ENCODE measurements at regions of chr19 and their contacts with region 1.

Region 1: GRCh38 chr19:7919610-7920518 is at the start of gene SNAPC2:
- DNase-seq: peak; percentile 96 to 99 (median 97)
- H3K4me3 ChIP-seq: peak within 1 kb of the TSS; percentile 71 to 76
- H3K4me3 Mint-ChIP-seq: peak within 1 kb of the TSS; percentile 88 to 97 (median 92)
- H3K27ac ChIP-seq: peak within 1 kb of the TSS; percentile 76
- H3K27ac Mint-ChIP-seq: peak within 1 kb of the TSS; percentile 85 to 96 (median 94)
- H3K4me1 ChIP-seq: peaks cover 53% of the 10 kb centered on the region
- H3K4me1 Mint-ChIP-seq: peaks cover 14 to 59% (median 38%) of the 10 kb centered on the region in 4 donors
- H3K27me3 ChIP-seq: peaks cover 13% of the 10 kb centered on the region
- H3K27me3 Mint-ChIP-seq: peaks cover 15 to 26% of the 10 kb centered on the region in 2 donors
- total RNA-seq, gene SNAPC2: 16.3 to 18.9 TPM

Region 2: DNA sequence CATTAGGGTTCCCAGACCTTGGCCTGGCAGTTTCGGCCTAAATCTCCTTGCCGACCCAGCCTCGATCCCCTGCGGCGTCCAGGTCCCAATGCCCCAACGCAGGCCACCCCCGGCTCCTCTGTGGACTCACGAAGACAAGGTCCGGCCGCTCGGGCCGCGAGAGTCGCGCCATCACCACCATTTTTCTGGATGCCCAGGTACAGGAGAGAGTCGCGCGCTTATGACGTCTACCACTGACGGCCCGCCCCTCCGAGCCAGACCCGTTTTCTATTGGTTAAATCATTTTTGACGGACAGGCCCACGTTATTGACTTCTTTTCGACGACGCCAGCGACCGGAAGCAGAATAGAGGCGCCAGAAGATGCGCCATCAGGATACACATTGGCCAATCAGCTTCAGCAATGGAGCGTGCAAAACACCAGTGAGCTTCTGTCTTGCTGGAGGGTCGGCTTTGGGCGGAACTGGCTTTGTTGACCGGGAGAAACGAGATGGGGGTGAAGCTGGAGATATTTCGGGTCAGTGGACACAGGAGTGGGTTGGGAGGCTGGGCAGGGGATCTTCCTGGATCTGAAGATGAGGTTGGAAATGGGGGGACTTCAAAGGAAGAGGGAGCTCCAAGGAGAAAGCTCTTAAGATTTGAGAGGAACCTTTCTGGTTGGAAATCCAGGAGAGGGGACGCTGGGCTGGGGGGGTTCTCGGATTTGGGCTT is 290.4 kb before region 1 on chr19 and contains the starts of genes PET100 and XAB2:
- CTCF ChIA-PET with region 1: no interaction called
- POLR2A ChIA-PET with region 1: interaction called, 6 read pairs
- intact Hi-C with region 1: loop called (anchors 5 kb)
- DNase-seq: peak; percentile 93 to 98 (median 96)
- H3K4me3 ChIP-seq: peak within 1 kb of the TSS; percentile 81 to 96
- H3K4me3 Mint-ChIP-seq: peak within 1 kb of the TSS; percentile 95 to 99 (median 96)
- H3K27ac ChIP-seq: peak within 1 kb of the TSS; percentile 94
- H3K27ac Mint-ChIP-seq: peak within 1 kb of the TSS; percentile 92 to 100 (median 99)
- H3K4me1 ChIP-seq: peaks cover 31% of the 10 kb centered on the region
- H3K4me1 Mint-ChIP-seq: peaks cover 16 to 47% (median 34%) of the 10 kb centered on the region in 4 donors
- H3K27me3 ChIP-seq: no peaks in the 10 kb centered on the region
- H3K27me3 Mint-ChIP-seq: no peaks in the 10 kb centered on the region
- total RNA-seq, gene PET100: 120 to 144 TPM
- total RNA-seq, gene XAB2: 75.6 to 77.2 TPM

Region 3: DNA sequence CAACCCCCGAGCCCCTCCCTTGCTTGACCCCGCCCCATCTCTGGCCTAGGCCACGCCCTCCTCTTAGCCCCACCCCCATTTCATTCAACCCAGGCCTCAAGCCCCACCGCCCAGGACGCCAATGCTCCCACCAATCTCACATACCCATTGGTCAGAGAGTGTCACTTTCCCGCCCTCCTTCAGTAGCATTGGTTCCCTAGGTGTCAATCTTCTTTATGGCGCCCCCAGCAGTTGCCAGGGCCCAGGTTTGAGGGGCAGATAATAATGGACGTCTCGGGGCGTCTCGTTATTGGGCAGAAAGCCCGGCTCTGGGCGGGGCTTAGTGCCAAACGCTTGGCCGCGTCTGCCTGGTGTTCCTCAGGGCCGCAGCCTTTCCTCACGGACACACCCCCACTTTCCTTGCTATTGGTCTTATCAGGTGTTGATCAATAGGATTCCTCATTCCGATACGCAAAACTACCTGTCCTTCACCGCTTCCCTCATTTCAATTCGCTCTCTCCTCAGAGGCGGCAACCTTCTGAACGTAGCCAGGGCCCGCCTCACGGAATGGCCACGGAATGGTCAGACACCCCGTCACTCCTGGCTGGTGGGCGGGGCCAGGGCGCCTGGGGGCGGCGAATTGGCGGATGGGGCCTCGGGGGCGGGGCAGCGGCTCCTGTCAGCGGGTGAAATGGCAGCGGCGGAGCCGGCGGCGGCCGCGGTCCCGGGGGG is 90.1 kb before region 1 on chr19 and contains the start of gene EVI5L:
- CTCF ChIA-PET with region 1: no interaction called
- POLR2A ChIA-PET with region 1: interaction called, 3 read pairs
- intact Hi-C with region 1: loop called (anchors 1 kb)
- DNase-seq: peak; percentile 99
- H3K4me3 ChIP-seq: peak within 1 kb of the TSS in 1 of 2 donors; percentile 50
- H3K4me3 Mint-ChIP-seq: peak within 1 kb of the TSS; percentile 76 to 88 (median 86)
- H3K27ac ChIP-seq: peak within 1 kb of the TSS; percentile 36
- H3K27ac Mint-ChIP-seq: peak within 1 kb of the TSS; percentile 63 to 90 (median 87)
- H3K4me1 ChIP-seq: peaks cover 22% of the 10 kb centered on the region
- H3K4me1 Mint-ChIP-seq: peaks cover 11 to 28% (median 18%) of the 10 kb centered on the region in 4 donors
- H3K27me3 ChIP-seq: no peaks in the 10 kb centered on the region
- H3K27me3 Mint-ChIP-seq: no peaks in the 10 kb centered on the region
- total RNA-seq, gene EVI5L: 11.9 to 14.1 TPM

Region 4: DNA sequence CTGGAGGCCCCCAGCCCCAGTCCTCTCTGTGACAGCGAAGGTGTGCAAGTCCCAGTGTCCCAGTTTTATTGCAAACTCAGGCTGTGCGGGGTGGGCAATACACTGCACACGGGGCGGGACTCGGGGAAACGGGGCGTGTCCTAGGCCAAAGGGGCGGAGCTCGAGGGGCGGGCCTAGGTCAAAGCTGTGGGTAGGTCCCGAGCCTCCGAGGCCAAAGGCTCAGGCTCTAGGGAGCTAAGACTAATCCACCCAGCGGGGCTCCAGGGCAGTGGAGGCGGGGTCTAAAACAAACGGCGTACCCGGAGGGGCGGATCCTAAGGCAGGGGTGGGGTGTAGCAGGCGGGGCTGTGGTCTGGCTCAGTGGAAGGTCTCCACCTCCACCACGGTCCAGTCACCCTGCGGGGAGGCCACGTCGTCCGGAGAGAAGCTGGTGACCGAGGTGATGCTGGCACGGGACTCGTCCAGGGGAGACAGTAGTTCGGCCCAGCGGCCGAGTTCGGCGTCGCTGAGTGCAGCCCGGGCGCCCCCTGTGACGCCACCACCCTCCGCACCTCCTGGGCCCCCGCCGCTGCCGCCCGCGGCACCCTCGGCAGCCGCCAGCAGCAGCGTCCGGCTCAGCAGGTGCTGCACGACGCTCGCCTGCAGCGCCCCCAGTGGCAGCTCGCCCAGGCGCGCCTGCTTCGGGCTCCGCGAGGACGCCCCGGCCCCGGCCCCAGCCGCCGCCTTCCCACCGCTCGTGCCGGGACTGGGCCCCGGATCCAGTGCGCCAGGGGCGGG is 51.0 kb before region 1 on chr19:
- CTCF ChIA-PET with region 1: interaction called, 30 read pairs
- POLR2A ChIA-PET with region 1: interaction called, 29 read pairs
- intact Hi-C with region 1: loop called (anchors 1 kb)
- DNase-seq: peak; percentile 85 to 95 (median 92)
- H3K4me3 ChIP-seq: peak overlapping the region; percentile 28 to 75
- H3K4me3 Mint-ChIP-seq: peak overlapping the region; percentile 73 to 88 (median 80)
- H3K27ac ChIP-seq: peak overlapping the region; percentile 61
- H3K27ac Mint-ChIP-seq: peak overlapping the region; percentile 83 to 96 (median 91)
- H3K4me1 ChIP-seq: peaks cover 43% of the 10 kb centered on the region
- H3K4me1 Mint-ChIP-seq: peaks cover 21 to 48% (median 36%) of the 10 kb centered on the region in 4 donors
- H3K27me3 ChIP-seq: no peaks in the 10 kb centered on the region
- H3K27me3 Mint-ChIP-seq: peaks cover 5 to 17% of the 10 kb centered on the region in 2 donors

Region 5: DNA sequence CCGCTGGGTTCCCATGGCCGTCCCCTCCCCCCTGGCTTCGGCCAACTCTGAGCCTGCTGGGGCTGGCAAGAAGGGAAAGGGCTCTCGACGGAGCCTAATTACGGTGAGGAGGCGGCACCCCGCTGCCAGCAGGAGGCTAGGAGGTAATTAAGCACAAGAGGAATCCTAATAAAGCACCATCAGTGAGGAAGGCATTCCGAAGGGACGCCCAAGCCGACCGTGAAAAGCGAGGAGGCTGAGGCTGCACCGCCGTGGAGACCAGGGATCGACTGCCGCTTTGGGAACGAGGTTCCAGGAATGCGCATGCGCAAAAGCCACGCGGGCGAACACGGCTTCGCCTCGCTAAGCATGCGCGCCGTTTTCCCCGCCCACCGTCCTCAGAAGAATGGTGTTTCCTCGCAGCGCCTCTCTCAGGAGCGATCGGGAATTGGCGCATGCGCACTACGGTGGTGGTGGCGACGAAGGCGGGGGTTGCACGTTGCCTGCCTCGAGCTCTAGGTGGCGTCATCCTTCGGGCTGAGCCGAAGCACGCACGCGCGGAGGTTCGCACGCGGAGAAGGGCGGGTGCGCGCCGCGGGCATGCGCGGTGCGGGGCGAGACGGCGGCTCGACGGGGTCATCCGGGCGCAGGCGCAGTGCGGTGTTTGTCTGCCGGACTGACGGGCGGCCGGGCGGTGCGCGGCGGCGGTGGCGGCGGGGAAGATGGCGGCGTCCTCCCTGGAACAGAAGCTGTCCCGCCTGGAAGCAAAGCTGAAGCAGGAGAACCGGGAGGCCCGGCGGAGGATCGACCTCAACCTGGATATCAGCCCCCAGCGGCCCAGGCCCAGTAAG is 16.4 kb before region 1 on chr19 and contains the start of gene MAP2K7:
- CTCF ChIA-PET with region 1: interaction called, 21 read pairs
- POLR2A ChIA-PET with region 1: interaction called, 82 read pairs
- intact Hi-C with region 1: loop called (anchors 1 kb)
- DNase-seq: peak; percentile 100
- H3K4me3 ChIP-seq: peak within 1 kb of the TSS; percentile 61 to 96
- H3K4me3 Mint-ChIP-seq: peak within 1 kb of the TSS; percentile 88 to 99 (median 90)
- H3K27ac ChIP-seq: peak within 1 kb of the TSS; percentile 83
- H3K27ac Mint-ChIP-seq: peak within 1 kb of the TSS; percentile 94 to 100 (median 97)
- H3K4me1 ChIP-seq: peaks cover 32% of the 10 kb centered on the region
- H3K4me1 Mint-ChIP-seq: peaks cover 15 to 37% (median 26%) of the 10 kb centered on the region in 4 donors
- H3K27me3 ChIP-seq: no peaks in the 10 kb centered on the region
- H3K27me3 Mint-ChIP-seq: peaks cover 2 to 5% of the 10 kb centered on the region in 2 donors
- total RNA-seq, gene MAP2K7: 59.7 to 62.5 TPM

Region 6: DNA sequence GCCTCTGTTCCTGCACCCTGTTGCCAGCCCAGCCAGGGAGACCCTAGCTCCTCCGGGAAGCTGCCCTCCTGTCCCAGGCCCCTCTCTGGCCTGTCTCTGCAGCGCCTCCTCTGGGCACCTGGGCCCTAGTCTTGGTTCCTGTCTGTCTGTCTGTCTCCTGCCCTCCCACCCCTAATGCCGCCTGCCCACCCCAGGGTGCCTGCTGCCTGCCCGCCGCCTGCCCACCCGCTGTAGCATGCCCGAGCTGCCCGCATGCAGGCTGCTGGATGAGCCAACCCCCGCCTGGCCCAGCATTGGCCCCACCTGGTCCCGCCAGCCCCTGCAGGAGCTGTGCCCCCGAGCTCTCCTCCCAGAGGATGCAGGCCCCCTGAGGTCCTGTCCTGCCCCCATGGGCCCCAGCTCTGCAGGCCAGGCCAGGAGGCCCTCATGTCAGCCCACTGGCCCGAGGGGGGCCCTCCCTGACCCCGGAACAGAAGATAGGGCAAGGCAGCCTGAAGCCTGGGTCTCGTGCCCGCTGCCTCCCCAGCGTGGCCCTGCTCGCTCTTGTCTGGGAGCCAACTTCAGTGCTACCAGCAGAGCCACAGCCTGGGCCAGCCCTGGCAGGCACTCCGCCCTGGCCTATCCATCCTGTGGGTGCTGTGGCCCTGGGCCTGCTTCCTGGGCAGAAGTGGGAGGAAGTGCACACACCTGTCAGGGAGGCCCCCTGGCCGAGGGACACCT is 11.0 kb before region 1 on chr19:
- CTCF ChIA-PET with region 1: interaction called, 21 read pairs
- POLR2A ChIA-PET with region 1: interaction called, 82 read pairs
- intact Hi-C with region 1: no loop called
- DNase-seq: no peak
- H3K4me3 ChIP-seq: no peak overlapping the region
- H3K4me3 Mint-ChIP-seq: no peak overlapping the region
- H3K27ac ChIP-seq: no peak overlapping the region
- H3K27ac Mint-ChIP-seq: no peak overlapping the region
- H3K4me1 ChIP-seq: peaks cover 24% of the 10 kb centered on the region
- H3K4me1 Mint-ChIP-seq: peaks cover 8 to 27% (median 16%) of the 10 kb centered on the region in 4 donors
- H3K27me3 ChIP-seq: no peaks in the 10 kb centered on the region
- H3K27me3 Mint-ChIP-seq: no peaks in the 10 kb centered on the region

Region 7: GRCh38 chr19:8389891-8390616 is 470.2 kb after region 1 on chr19 and contains the start of gene RAB11B:
- CTCF ChIA-PET with region 1: no interaction called
- POLR2A ChIA-PET with region 1: no interaction called
- intact Hi-C with region 1: loop called (anchors 1 kb)
- DNase-seq: peak; percentile 96 to 99 (median 99)
- H3K4me3 ChIP-seq: peak within 1 kb of the TSS; percentile 65 to 81
- H3K4me3 Mint-ChIP-seq: peak within 1 kb of the TSS; percentile 89 to 97 (median 93)
- H3K27ac ChIP-seq: peak within 1 kb of the TSS; percentile 96
- H3K27ac Mint-ChIP-seq: peak within 1 kb of the TSS; percentile 91 to 99 (median 97)
- H3K4me1 ChIP-seq: peaks cover 22% of the 10 kb centered on the region
- H3K4me1 Mint-ChIP-seq: peaks cover 9 to 37% (median 29%) of the 10 kb centered on the region in 4 donors
- H3K27me3 ChIP-seq: no peaks in the 10 kb centered on the region
- H3K27me3 Mint-ChIP-seq: no peaks in the 10 kb centered on the region
- total RNA-seq, gene RAB11B: 107 to 109 TPM